HepG2 (cell line): ENCODE measurements at regions of chr17 and their contacts with region 1.

Region 1: GRCh38 chr17:45161019-45161825 is 453 bp upstream of the HEXIM2 start:
- DNase-seq: peak; percentile 100
- ATAC-seq: peak; percentile 75
- H3K4me3 ChIP-seq: peak overlapping the region; percentile 74 to 93 (median 92)
- H3K27ac ChIP-seq: peak overlapping the region; percentile 98
- H3K4me1 ChIP-seq: peaks cover 59% of the 10 kb centered on the region
- H3K27me3 ChIP-seq: no peaks in the 10 kb centered on the region; a peak in 1 of 5 replicates
- CTCF ChIP-seq: no peak
- EP300 ChIP-seq: peak in 1 of 2 experiments; percentile 52; a peak in 3 of 4 replicates
- POLR2A ChIP-seq: peak; percentile 76 to 88
- RAD21 ChIP-seq: peak; percentile 6

Region 2: GRCh38 chr17:45123930-45124796 is 37.1 kb before region 1 on chr17:
- CTCF ChIA-PET with region 1: no interaction called
- POLR2A ChIA-PET with region 1: interaction called, 26 read pairs
- in situ Hi-C with region 1: no loop called
- intact Hi-C with region 1: no loop called
- DNase-seq: peak; percentile 86
- ATAC-seq: peak; percentile 79
- H3K4me3 ChIP-seq: peak overlapping the region; percentile 19 to 60 (median 29); a peak in 2 of 6 replicates
- H3K27ac ChIP-seq: peak overlapping the region; percentile 63
- H3K4me1 ChIP-seq: peaks cover 67% of the 10 kb centered on the region
- H3K27me3 ChIP-seq: no peaks in the 10 kb centered on the region
- CTCF ChIP-seq: 0 out of 2 replicates have a peak, but pooled peaks have one; percentile 5
- EP300 ChIP-seq: peak; percentile 25 to 74; a peak in 2 of 4 replicates
- POLR2A ChIP-seq: no peak
- RAD21 ChIP-seq: 0 out of 2 replicates have a peak, but pooled peaks have one; percentile 10

Region 3: GRCh38 chr17:45172454-45173286 is 11.4 kb after region 1 on chr17:
- CTCF ChIA-PET with region 1: interaction called, 3 read pairs
- POLR2A ChIA-PET with region 1: interaction called, 2,487 read pairs
- in situ Hi-C with region 1: no loop called
- intact Hi-C with region 1: loop called (anchors 1 kb)
- DNase-seq: peak; percentile 97
- ATAC-seq: peak; percentile 66
- H3K4me3 ChIP-seq: peak overlapping the region; percentile 53 to 74 (median 65)
- H3K27ac ChIP-seq: peak overlapping the region; percentile 97
- H3K4me1 ChIP-seq: peaks cover 70% of the 10 kb centered on the region
- H3K27me3 ChIP-seq: no peaks in the 10 kb centered on the region
- CTCF ChIP-seq: peak; percentile 51
- EP300 ChIP-seq: peak; percentile 47 to 74; a peak in 2 of 4 replicates
- POLR2A ChIP-seq: peak; percentile 75 to 80
- RAD21 ChIP-seq: peak; percentile 69

Region 4: DNA sequence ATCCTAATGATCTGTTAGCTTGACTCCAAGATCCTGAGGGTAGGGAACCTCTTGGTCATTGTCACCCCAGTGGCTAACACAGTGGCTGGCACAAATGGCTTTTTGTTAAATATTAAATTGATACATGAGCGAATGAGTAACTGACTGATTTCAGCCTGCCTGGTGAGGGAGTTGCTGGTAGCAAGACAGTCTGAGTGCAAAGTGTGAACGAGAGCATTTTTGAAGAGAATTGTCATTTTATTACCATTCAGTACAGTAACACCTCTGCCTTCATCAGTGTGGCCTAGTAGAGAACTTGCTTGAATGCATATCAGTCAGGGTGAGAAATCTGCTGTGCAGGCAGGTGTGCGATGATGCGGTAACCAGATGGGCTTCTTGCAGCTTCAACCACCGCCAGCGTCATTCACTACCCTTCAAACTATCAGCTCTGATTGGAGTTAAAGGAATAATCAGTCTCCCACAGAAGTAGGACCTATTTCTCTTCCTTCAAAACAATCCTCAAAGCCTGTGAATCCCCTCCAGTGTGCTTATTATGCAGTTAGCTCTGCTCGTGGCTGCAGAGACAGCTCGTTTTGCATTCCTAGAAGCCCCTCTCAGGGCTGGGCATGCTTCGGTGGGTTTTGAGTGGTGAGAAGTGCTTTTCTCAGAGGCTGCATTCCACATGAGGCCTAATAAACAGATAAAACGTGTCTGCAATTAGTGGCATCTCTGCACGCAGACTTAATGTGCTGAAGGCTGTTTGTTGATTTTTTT is 29.5 kb after region 1 on chr17:
- CTCF ChIA-PET with region 1: no interaction called
- POLR2A ChIA-PET with region 1: interaction called, 551 read pairs
- in situ Hi-C with region 1: no loop called
- intact Hi-C with region 1: no loop called
- DNase-seq: no peak
- ATAC-seq: peak; percentile 29
- H3K4me3 ChIP-seq: 0 out of 6 replicates have a peak overlapping the region, but pooled peaks of 1 of the 3 experiments have one; percentile 11
- H3K27ac ChIP-seq: no peak overlapping the region
- H3K4me1 ChIP-seq: peaks cover 52% of the 10 kb centered on the region
- H3K27me3 ChIP-seq: no peaks in the 10 kb centered on the region
- CTCF ChIP-seq: no peak
- EP300 ChIP-seq: no peak
- POLR2A ChIP-seq: no peak
- RAD21 ChIP-seq: no peak

Region 5: DNA sequence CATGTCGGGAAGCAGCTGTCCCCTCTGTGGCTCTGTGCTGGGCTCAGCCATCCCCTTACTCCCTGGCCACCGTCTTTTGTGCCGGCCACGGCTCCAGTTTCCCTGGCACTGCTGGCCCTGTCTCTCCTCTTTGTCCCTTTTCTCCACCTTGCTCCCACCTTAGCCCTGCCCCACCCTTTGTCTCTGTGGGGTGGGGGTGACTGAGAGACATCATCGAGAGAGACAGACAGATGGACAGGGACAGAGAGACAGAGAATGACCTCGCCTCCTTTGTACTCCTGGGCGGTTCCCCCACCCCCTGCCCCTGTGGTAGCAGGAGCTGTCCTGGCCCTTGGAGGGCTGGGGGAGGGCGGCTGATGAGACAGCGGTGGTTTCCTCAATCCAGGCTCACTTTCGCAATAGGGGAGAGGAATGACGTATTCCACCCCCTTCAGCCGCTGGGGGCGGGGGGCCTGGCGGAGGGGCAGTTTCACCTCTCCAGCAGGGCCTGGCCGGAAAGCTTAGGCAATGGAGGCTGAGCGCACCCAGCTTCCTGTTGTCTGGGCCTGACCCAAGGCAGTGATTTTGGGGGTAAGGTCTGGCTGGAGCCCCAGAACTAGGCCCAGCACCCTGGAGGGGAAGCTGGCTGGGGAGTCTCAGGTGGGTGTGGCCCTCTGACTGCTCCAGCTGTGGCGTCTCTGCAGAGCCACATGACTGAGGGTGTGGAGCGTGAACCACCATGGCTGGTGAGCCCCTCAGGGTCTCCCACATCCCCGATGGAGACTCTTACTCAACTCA is 67.7 kb after region 1 on chr17:
- CTCF ChIA-PET with region 1: no interaction called
- POLR2A ChIA-PET with region 1: interaction called, 16 read pairs
- in situ Hi-C with region 1: no loop called
- intact Hi-C with region 1: no loop called
- DNase-seq: peak; percentile 56
- ATAC-seq: peak; percentile 3; the same call in 2 of the 3 replicates
- H3K4me3 ChIP-seq: peak overlapping the region; percentile 7 to 62 (median 19); a peak in 4 of 6 replicates
- H3K27ac ChIP-seq: no peak overlapping the region
- H3K4me1 ChIP-seq: peaks cover 71% of the 10 kb centered on the region
- H3K27me3 ChIP-seq: peaks cover 10 to 40% of the 10 kb centered on the region in 2 experiments; a peak in 4 of 5 replicates
- CTCF ChIP-seq: no peak
- EP300 ChIP-seq: no peak
- POLR2A ChIP-seq: no peak
- RAD21 ChIP-seq: no peak